Activated CD8-positive, alpha-beta T cell treated with anti-CD3 and anti-CD28 coated beads for 36 hours (primary cell): ENCODE measurements at regions of chr13 and their contacts with region 1.

Region 1: DNA sequence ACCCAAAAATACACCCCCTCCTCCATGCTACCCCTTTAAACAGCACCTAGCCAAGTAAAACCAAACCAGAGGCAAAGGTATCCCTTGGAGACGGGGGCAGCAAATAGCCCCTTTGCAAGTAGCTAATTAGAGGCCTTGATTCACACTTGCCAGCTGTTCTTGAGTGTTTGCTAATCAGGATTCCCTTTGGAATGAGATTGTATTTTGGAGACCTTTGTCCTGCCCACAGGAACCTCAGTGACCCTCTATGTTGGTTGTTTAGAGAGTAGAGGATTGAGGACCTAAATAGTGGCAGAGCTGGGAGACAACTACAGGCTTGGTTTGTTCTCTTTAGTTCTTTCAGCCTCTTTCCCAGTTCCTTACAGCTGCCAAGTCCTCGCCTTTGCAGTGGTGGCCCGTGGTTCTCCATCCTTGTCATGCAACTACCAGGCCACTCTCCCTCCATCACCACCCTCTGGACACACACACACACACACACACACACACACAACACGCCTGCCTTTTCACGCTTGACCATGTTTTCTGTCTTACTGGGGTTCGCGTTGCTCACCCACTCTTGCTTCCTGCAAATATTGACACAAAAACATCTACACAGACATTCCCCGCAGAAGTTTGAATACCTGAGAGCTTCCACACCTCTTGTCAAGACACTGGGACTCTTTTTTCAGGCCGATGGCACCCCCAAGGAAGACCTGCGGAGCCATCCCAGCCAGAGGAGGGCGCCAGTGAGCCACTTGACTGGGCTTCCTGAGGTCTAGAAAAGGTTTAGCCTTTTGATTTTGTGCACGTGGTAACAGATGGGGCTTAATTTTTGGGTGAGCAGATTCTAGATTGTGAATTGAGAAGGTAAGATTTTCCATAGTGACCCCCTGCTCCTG is 80.0 kb upstream of the GPR183 start:
- DNase-seq: peak; percentile 92
- ATAC-seq: peak; percentile 50
- H3K4me3 Mint-ChIP-seq: no peak overlapping the region
- H3K27ac Mint-ChIP-seq: peak overlapping the region; percentile 84
- H3K4me1 Mint-ChIP-seq: peaks cover 66% of the 10 kb centered on the region
- H3K27me3 Mint-ChIP-seq: no peaks in the 10 kb centered on the region
- CTCF ChIP-seq: peak; percentile 99

Region 2: DNA sequence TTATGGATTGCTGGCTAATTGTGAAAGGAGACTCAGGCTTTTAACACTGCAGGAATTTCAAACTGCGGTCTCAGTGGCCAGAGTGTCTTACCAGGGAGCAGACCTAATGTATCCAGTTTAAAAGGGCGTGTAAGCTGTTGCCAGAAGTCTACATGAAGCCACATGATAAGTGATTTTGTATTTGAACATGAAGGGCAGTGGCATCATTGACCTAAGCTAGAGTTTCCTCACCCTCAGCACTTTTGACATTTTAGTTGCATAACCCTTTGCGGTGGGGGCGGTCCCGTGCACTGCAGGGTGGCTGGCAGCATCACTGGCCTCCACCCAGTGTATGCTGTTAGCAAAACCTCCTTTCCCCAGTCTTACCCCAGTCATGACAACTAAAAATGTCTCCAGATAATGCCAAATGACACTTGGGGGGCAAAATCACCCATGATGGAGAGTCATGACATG is 105.3 kb before region 1 on chr13:
- CTCF ChIA-PET with region 1: interaction called, 10 read pairs
- POLR2A ChIA-PET with region 1: no interaction called
- intact Hi-C with region 1: no loop called
- DNase-seq: peak; percentile 73
- ATAC-seq: peak; percentile 75
- H3K4me3 Mint-ChIP-seq: no peak overlapping the region
- H3K27ac Mint-ChIP-seq: peak overlapping the region; percentile 28
- H3K4me1 Mint-ChIP-seq: peaks cover 87% of the 10 kb centered on the region
- H3K27me3 Mint-ChIP-seq: no peaks in the 10 kb centered on the region
- CTCF ChIP-seq: no peak

Region 3: DNA sequence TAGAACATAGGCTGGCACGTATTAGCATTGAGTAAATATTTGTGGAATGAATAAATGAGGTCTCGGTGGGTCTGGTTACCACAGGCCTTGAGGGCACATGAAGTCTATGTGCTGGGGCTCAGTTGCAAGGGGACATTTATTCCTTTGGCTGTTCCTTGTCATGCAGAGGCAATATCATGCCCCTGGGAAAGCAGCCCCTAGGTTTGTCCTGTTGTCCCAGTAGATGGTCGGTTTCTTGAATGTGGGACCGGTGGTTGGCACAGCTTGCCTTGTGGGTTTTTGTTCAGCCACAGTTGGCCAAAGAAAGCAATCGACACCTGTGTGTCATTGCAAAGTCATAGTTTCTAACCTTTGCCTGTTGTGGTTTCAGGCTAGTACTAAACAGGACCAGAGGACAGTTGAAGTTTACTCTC is 55.3 kb before region 1 on chr13:
- CTCF ChIA-PET with region 1: interaction called, 10 read pairs
- POLR2A ChIA-PET with region 1: no interaction called
- intact Hi-C with region 1: no loop called
- DNase-seq: peak; percentile 57
- ATAC-seq: peak; percentile 80
- H3K4me3 Mint-ChIP-seq: no peak overlapping the region
- H3K27ac Mint-ChIP-seq: peak overlapping the region; percentile 60
- H3K4me1 Mint-ChIP-seq: peaks cover 68% of the 10 kb centered on the region
- H3K27me3 Mint-ChIP-seq: no peaks in the 10 kb centered on the region
- CTCF ChIP-seq: no peak

Region 4: DNA sequence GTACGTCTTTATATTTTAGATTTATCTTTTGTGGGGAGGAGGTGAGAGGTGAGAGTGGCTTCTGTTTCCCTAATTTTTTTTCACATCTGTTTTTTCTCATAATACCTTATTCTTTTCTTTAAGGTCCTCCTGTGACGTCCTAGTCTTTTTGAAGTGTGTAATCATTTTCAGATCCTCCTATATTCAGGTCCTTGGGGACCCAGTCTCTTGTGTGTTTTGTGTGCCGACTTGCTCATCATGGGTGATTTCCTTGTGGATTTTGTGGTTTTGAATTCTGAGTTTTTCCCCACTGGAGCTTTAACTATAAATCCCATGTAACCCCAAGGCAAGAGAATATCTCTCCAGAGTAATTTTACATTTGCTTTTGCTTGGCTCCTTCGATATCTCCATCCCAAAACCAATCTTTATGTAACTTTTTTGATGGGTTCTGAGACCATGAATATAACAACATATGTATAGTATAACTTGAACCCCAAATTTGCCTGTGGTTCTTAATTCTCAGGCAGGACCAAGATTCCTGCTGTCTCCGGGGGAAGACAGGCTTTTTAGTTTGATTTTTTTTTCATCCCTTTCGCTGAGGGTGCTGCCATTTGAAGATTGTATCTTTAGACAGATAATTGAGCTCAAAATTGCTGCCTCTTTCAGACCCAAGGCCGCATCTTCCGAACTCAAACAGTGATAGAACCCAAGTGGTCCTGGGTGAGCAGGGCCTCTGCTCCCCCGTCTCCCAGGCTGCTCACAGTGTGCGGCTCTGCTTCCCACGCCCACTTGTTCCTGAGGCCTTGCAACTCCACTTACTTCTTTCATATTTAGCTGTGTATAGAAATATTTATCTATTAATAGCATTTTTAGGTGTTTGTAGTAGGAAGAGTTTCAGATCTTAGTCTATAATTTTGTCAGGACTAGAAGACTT is 20.8 kb before region 1 on chr13:
- CTCF ChIA-PET with region 1: interaction called, 13 read pairs
- POLR2A ChIA-PET with region 1: interaction called, 14 read pairs
- intact Hi-C with region 1: no loop called
- DNase-seq: peak; percentile 48
- ATAC-seq: peak; percentile 22
- H3K4me3 Mint-ChIP-seq: peak overlapping the region; percentile 38
- H3K27ac Mint-ChIP-seq: peak overlapping the region; percentile 61
- H3K4me1 Mint-ChIP-seq: peaks cover 87% of the 10 kb centered on the region
- H3K27me3 Mint-ChIP-seq: no peaks in the 10 kb centered on the region
- CTCF ChIP-seq: no peak

Region 5: DNA sequence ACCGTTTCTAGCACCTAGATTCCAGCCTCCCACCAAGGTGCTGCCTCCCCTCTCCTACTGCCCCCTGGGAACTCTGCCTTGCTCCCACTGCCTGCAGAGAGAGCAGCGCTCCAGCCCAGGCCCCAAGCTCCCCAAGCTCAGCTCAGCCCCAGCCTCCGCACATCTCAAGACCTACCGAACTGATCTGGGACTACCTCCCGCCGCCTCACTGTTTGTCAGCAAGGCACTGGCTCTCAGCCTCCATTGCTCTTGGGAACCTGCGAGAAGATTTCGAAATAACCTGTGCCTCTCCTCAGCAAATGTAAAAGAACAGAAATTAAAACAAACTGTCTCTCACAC is 12.5 kb after region 1 on chr13:
- CTCF ChIA-PET with region 1: interaction called, 73 read pairs
- POLR2A ChIA-PET with region 1: interaction called, 6 read pairs
- intact Hi-C with region 1: no loop called
- DNase-seq: no peak
- ATAC-seq: no peak
- H3K4me3 Mint-ChIP-seq: peak overlapping the region; percentile 62
- H3K27ac Mint-ChIP-seq: peak overlapping the region; percentile 91
- H3K4me1 Mint-ChIP-seq: peaks cover 63% of the 10 kb centered on the region
- H3K27me3 Mint-ChIP-seq: no peaks in the 10 kb centered on the region
- CTCF ChIP-seq: no peak

Region 6: GRCh38 chr13:99417201-99418102 is 30.3 kb after region 1 on chr13:
- CTCF ChIA-PET with region 1: interaction called, 73 read pairs
- POLR2A ChIA-PET with region 1: interaction called, 4 read pairs
- intact Hi-C with region 1: no loop called
- DNase-seq: peak; percentile 55
- ATAC-seq: no peak
- H3K4me3 Mint-ChIP-seq: no peak overlapping the region
- H3K27ac Mint-ChIP-seq: no peak overlapping the region
- H3K4me1 Mint-ChIP-seq: peaks cover 64% of the 10 kb centered on the region
- H3K27me3 Mint-ChIP-seq: no peaks in the 10 kb centered on the region
- CTCF ChIP-seq: no peak

Region 7: GRCh38 chr13:99442273-99442895 is 55.2 kb after region 1 on chr13:
- CTCF ChIA-PET with region 1: interaction called, 395 read pairs
- POLR2A ChIA-PET with region 1: interaction called, 38 read pairs
- intact Hi-C with region 1: loop called (anchors 1 kb)
- DNase-seq: peak; percentile 60
- ATAC-seq: peak; percentile 86
- H3K4me3 Mint-ChIP-seq: no peak overlapping the region
- H3K27ac Mint-ChIP-seq: no peak overlapping the region
- H3K4me1 Mint-ChIP-seq: peaks cover 7% of the 10 kb centered on the region
- H3K27me3 Mint-ChIP-seq: peaks cover 2% of the 10 kb centered on the region
- CTCF ChIP-seq: peak; percentile 97